ENCODE measurements at regions of chr5 and their contacts with region 1.

Region 1: GRCh38 chr5:60649283-60649917 is 50.6 kb downstream of the DEPDC1B start:
- DNase-seq: peak; percentile 41
- CTCF ChIP-seq: peak; percentile 60

Region 2: GRCh38 chr5:60633341-60633740 is 16.1 kb before region 1 on chr5:
- CTCF ChIA-PET with region 1: interaction called, 11 read pairs
- POLR2A ChIA-PET with region 1: no interaction called
- DNase-seq: no peak
- CTCF ChIP-seq: no peak

Region 3: DNA sequence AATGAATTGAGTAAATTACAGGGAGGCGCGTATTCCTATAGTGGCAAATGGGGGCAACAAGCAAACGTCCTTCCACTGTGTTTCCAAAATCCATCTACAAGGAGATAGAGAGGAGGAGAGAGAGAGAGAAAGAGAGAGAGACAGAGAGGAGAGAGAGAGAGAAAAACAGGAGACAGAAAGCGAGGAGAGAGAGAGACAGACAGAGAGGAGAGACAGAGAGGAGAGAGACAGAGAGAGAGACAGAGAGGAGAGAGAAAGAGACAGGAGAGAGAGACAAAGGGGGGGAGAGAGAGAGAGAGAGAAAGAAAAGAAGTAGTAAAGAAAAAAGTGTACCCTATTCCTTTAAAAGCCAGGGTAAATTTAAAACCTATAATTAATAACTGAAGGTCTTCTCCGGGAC is 10.6 kb after region 1 on chr5:
- CTCF ChIA-PET with region 1: interaction called, 14 read pairs
- POLR2A ChIA-PET with region 1: no interaction called
- DNase-seq: no peak
- CTCF ChIP-seq: no peak